Lower leg skin (tissue), 4 donors: ENCODE measurements at regions of chr15 and their contacts with region 1.

Region 1: GRCh38 chr15:51089739-51090453 is 4.8 kb downstream of the TNFAIP8L3 start:
- DNase-seq: no peak
- H3K4me3 ChIP-seq: no peak overlapping the region
- CTCF ChIP-seq: no peak
- POLR2A ChIP-seq: no peak

Region 2: DNA sequence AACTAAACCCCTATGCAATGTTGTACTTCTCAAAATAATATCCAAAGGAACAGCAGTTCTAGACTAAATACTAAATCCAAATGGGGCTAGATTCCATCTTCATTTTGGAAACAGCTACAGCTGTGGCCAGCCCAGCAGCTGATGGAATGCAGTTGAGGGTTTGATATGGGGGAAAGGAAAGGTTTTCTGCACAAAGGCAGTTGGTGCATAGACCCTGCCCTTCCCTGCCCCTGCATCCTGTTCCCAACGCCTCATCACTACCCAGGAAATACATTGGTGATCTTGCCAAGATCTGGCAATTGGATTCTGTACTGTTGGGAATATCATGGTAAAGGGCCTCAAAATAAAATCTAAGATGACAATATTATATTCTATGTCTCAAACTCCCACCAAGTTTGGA is 1425.2 kb before region 1 on chr15:
- intact Hi-C with region 1: no loop called
- DNase-seq: no peak
- H3K4me3 ChIP-seq: no peak overlapping the region
- CTCF ChIP-seq: no peak
- POLR2A ChIP-seq: no peak

Region 3: GRCh38 chr15:52408823-52409222 is 1318.9 kb after region 1 on chr15:
- intact Hi-C with region 1: loop called (anchors 10 kb)
- DNase-seq: no peak
- H3K4me3 ChIP-seq: no peak overlapping the region
- CTCF ChIP-seq: no peak
- POLR2A ChIP-seq: no peak